ENCODE measurements at regions of chr7 and their contacts with region 1.

Region 1: GRCh38 chr7:23410446-23411183 is 59.7 kb downstream of the IGF2BP3 start:
- DNase-seq: no peak
- H3K4me3 ChIP-seq: no peak overlapping the region
- H3K27ac ChIP-seq: 0 out of 2 replicates have a peak overlapping the region, but pooled peaks have one; percentile 4
- H3K4me1 ChIP-seq: no peaks in the 10 kb centered on the region
- H3K27me3 ChIP-seq: no peaks in the 10 kb centered on the region
- CTCF ChIP-seq: no peak

Region 2: GRCh38 chr7:23369695-23370404 is 40.8 kb before region 1 on chr7:
- CTCF ChIA-PET with region 1: interaction called, 14 read pairs
- POLR2A ChIA-PET with region 1: no interaction called
- intact Hi-C with region 1: no loop called
- DNase-seq: no peak
- H3K4me3 ChIP-seq: no peak overlapping the region
- H3K27ac ChIP-seq: no peak overlapping the region
- H3K4me1 ChIP-seq: no peaks in the 10 kb centered on the region
- H3K27me3 ChIP-seq: no peaks in the 10 kb centered on the region
- CTCF ChIP-seq: no peak

Region 3: GRCh38 chr7:23394488-23395171 is 16.0 kb before region 1 on chr7:
- CTCF ChIA-PET with region 1: interaction called, 13 read pairs
- POLR2A ChIA-PET with region 1: no interaction called
- intact Hi-C with region 1: no loop called
- DNase-seq: no peak
- H3K4me3 ChIP-seq: no peak overlapping the region
- H3K27ac ChIP-seq: no peak overlapping the region
- H3K4me1 ChIP-seq: no peaks in the 10 kb centered on the region
- H3K27me3 ChIP-seq: no peaks in the 10 kb centered on the region
- CTCF ChIP-seq: no peak

Region 4: DNA sequence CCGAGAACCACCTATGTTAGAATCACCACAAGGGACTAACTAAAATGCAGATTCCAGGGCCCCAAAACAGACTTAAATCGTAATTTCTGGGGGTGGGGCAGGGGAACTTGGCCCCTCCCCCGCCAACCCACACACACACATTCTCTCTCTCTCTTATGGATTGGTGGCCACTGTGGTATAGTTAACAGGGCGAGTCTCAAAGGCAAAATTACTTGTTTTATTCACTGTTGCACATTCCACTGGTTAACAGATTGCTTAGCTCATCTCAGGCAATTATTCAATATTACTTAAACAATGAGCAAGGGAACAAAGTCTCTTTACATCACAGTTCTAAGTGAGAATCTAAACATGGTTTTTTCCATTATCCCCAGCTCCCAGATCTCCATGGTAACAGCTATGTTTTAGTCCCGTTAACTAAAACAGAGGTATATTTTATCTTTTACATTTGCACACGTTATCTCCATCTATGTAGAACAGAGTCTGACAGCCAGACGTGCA is 21.1 kb after region 1 on chr7:
- CTCF ChIA-PET with region 1: interaction called, 18 read pairs
- POLR2A ChIA-PET with region 1: no interaction called
- intact Hi-C with region 1: no loop called
- DNase-seq: no peak
- H3K4me3 ChIP-seq: no peak overlapping the region
- H3K27ac ChIP-seq: peak overlapping the region; percentile 71
- H3K4me1 ChIP-seq: peaks cover 29% of the 10 kb centered on the region
- H3K27me3 ChIP-seq: no peaks in the 10 kb centered on the region
- CTCF ChIP-seq: no peak

Region 5: GRCh38 chr7:23474829-23475578 is 64.4 kb after region 1 on chr7:
- CTCF ChIA-PET with region 1: no interaction called
- POLR2A ChIA-PET with region 1: no interaction called
- intact Hi-C with region 1: no loop called
- DNase-seq: no peak
- H3K4me3 ChIP-seq: peak overlapping the region; percentile 73
- H3K27ac ChIP-seq: peak overlapping the region; percentile 78
- H3K4me1 ChIP-seq: peaks cover 39% of the 10 kb centered on the region
- H3K27me3 ChIP-seq: no peaks in the 10 kb centered on the region
- CTCF ChIP-seq: no peak

Region 6: GRCh38 chr7:23514755-23515154 is 104.1 kb after region 1 on chr7:
- CTCF ChIA-PET with region 1: no interaction called
- POLR2A ChIA-PET with region 1: interaction called, 16 read pairs
- intact Hi-C with region 1: no loop called
- DNase-seq: no peak
- H3K4me3 ChIP-seq: no peak overlapping the region
- H3K27ac ChIP-seq: no peak overlapping the region
- H3K4me1 ChIP-seq: no peaks in the 10 kb centered on the region
- H3K27me3 ChIP-seq: no peaks in the 10 kb centered on the region
- CTCF ChIP-seq: no peak

Measured in PC-9 (cell line).